Activated CD4-positive, alpha-beta T cell treated with anti-CD3 and anti-CD28 coated beads for 36 hours (primary cell): ENCODE measurements at regions of chr1 and their contacts with region 1.

Region 1: GRCh38 chr1:23825076-23825761 is at the start of gene HMGCL:
- DNase-seq: peak; percentile 95
- ATAC-seq: peak; percentile 94
- H3K4me3 Mint-ChIP-seq: peak within 1 kb of the TSS; percentile 97
- H3K27ac Mint-ChIP-seq: peak within 1 kb of the TSS; percentile 97
- H3K4me1 Mint-ChIP-seq: peaks cover 19% of the 10 kb centered on the region
- H3K27me3 Mint-ChIP-seq: no peaks in the 10 kb centered on the region
- total RNA-seq, gene HMGCL: 31.9 to 46.0 TPM

Region 2: GRCh38 chr1:23777979-23778814 is 47.0 kb before region 1 on chr1 and contains the start of gene PITHD1:
- CTCF ChIA-PET with region 1: no interaction called
- POLR2A ChIA-PET with region 1: interaction called, 3 read pairs
- intact Hi-C with region 1: loop called in 1 of 2 experiments (anchors 1 kb)
- DNase-seq: peak; percentile 90
- ATAC-seq: peak; percentile 87
- H3K4me3 Mint-ChIP-seq: peak within 1 kb of the TSS; percentile 87
- H3K27ac Mint-ChIP-seq: peak within 1 kb of the TSS; percentile 87
- H3K4me1 Mint-ChIP-seq: peaks cover 43% of the 10 kb centered on the region
- H3K27me3 Mint-ChIP-seq: no peaks in the 10 kb centered on the region
- total RNA-seq, gene PITHD1: 53.1 to 64.1 TPM

Region 3: GRCh38 chr1:23790696-23791515 is 34.3 kb before region 1 on chr1 and contains the start of gene LYPLA2:
- CTCF ChIA-PET with region 1: no interaction called
- POLR2A ChIA-PET with region 1: no interaction called
- intact Hi-C with region 1: loop called in 1 of 2 experiments (anchors 1 kb)
- DNase-seq: peak; percentile 95
- ATAC-seq: peak; percentile 93
- H3K4me3 Mint-ChIP-seq: peak within 1 kb of the TSS; percentile 86
- H3K27ac Mint-ChIP-seq: peak within 1 kb of the TSS; percentile 79
- H3K4me1 Mint-ChIP-seq: peaks cover 13% of the 10 kb centered on the region
- H3K27me3 Mint-ChIP-seq: no peaks in the 10 kb centered on the region
- total RNA-seq, gene LYPLA2: 55.0 to 64.8 TPM

Region 4: GRCh38 chr1:23838401-23838866 is 13.2 kb after region 1 on chr1:
- CTCF ChIA-PET with region 1: interaction called, 5 read pairs
- POLR2A ChIA-PET with region 1: no interaction called
- intact Hi-C with region 1: loop called (anchors 1 kb)
- DNase-seq: peak; percentile 84
- ATAC-seq: peak; percentile 98
- H3K4me3 Mint-ChIP-seq: peak overlapping the region; percentile 45
- H3K27ac Mint-ChIP-seq: no peak overlapping the region
- H3K4me1 Mint-ChIP-seq: peaks cover 5% of the 10 kb centered on the region
- H3K27me3 Mint-ChIP-seq: peaks cover 5% of the 10 kb centered on the region

Region 5: DNA sequence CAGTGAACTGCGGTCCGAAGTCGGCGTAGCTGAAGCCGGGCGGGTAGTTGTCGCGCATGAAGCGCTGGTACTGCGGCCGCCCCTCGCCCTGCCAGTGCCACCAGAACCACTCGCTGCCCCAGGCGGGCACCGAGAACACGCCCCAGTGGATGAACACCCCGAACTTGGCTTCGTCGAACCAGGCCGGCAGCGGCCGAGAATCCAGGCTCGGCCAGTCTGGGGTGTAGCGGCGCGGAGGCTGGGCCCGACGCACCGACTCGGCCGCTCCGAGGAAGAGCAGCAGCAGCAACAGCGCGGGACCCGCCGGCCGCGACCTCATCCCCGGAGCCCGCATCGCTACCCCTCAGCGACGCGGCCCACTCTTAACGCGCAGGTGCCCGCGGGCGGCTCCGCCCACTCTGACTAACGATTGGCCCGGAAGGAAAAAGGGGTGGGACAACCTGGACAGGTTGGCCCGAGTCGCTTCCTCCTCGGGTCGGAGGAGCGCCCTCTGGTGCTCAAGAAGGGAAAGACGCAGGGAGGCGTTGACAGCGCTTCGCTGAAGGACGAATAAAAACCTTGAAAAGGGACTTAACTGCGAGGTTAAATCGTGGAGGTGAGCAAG is 42.8 kb after region 1 on chr1 and contains the start of gene FUCA1:
- CTCF ChIA-PET with region 1: interaction called, 3 read pairs
- POLR2A ChIA-PET with region 1: no interaction called
- intact Hi-C with region 1: loop called in 1 of 2 experiments (anchors 1 kb)
- DNase-seq: peak; percentile 95
- ATAC-seq: peak; percentile 97
- H3K4me3 Mint-ChIP-seq: peak within 1 kb of the TSS; percentile 76
- H3K27ac Mint-ChIP-seq: peak within 1 kb of the TSS; percentile 77
- H3K4me1 Mint-ChIP-seq: peaks cover 19% of the 10 kb centered on the region
- H3K27me3 Mint-ChIP-seq: no peaks in the 10 kb centered on the region
- total RNA-seq, gene FUCA1: 4.2 to 4.5 TPM